ENCODE measurements at regions of chr12 and their contacts with region 1.

Region 1: DNA sequence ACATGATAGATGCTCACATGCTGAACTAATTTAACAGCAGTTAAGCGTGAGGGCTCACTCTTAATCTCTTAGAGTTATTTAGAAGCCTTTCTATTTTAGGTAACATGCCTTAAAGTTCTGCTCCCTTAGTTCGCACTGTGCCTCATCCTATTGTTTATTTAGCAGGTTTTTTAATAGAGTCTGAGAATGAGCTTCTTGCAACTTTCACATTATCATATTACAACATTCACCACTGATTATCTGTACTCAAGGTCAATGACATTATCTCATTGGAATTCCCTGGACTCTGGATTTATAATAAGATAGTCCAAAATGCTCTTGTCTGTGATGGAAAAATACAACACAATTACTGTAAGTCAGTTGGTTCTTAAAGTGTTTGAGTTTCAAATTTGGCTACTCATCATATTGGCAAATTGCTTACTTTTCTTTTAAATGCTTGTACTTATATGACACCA is 183.6 kb upstream of the SLC38A2 start:
- DNase-seq: peak in 1 of 2 experiments; percentile 94
- H3K4me3 ChIP-seq: peak overlapping the region; percentile 40; the same call in 1 of the 2 replicates
- H3K27ac ChIP-seq: peak overlapping the region; percentile 94
- H3K4me1 ChIP-seq: peaks cover 68% of the 10 kb centered on the region
- H3K27me3 ChIP-seq: no peaks in the 10 kb centered on the region
- CTCF ChIP-seq: no peak

Region 2: GRCh38 chr12:46414591-46415268 is 141.4 kb before region 1 on chr12:
- CTCF ChIA-PET with region 1: interaction called, 5 read pairs
- POLR2A ChIA-PET with region 1: interaction called, 11 read pairs
- intact Hi-C with region 1: no loop called
- DNase-seq: peak in 1 of 2 experiments; percentile 57
- H3K4me3 ChIP-seq: no peak overlapping the region
- H3K27ac ChIP-seq: peak overlapping the region; percentile 36
- H3K4me1 ChIP-seq: peaks cover 16% of the 10 kb centered on the region
- H3K27me3 ChIP-seq: no peaks in the 10 kb centered on the region
- CTCF ChIP-seq: no peak

Region 3: GRCh38 chr12:46573347-46573658 is 17.2 kb after region 1 on chr12:
- CTCF ChIA-PET with region 1: no interaction called
- POLR2A ChIA-PET with region 1: no interaction called
- intact Hi-C with region 1: no loop called
- DNase-seq: no peak
- H3K4me3 ChIP-seq: no peak overlapping the region
- H3K27ac ChIP-seq: no peak overlapping the region
- H3K4me1 ChIP-seq: no peaks in the 10 kb centered on the region
- H3K27me3 ChIP-seq: no peaks in the 10 kb centered on the region
- CTCF ChIP-seq: no peak

Region 4: DNA sequence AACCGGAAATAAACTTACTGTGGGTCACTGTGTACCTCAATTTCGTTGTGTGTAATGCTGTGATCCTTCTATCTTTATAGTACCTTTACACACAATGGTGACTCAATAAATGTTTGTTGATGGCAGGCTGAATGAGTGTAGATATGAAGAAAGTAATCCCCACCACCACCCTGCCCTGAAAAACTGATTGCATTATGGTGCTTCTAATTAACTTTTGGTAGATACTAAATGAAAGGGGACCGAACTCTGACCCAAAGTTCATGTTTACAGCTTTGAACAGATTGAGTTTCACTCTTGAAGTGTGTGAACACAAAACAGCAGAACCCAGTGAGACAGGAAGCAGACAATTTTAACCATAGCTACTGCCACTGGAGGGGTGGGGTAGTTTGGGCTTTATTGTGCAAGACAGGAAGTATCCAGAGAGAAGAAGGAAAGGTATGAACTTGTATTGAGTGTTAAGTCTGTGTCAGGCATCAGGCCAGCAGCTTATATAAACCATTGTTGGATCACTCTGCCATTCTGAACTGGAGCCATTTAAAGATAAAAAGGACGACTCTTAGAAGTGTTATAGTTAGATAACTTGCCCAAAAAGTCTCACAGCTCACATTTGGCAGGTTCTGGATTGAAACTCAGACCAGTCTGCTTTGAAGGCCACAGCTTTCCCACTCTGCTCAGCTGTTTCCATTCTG is 720.6 kb after region 1 on chr12:
- CTCF ChIA-PET with region 1: no interaction called
- POLR2A ChIA-PET with region 1: no interaction called
- intact Hi-C with region 1: loop called (anchors 10 kb)
- DNase-seq: peak; percentile 64 to 80
- H3K4me3 ChIP-seq: peak overlapping the region; percentile 1; the same call in 1 of the 2 replicates
- H3K27ac ChIP-seq: peak overlapping the region; percentile 93
- H3K4me1 ChIP-seq: peaks cover 76% of the 10 kb centered on the region
- H3K27me3 ChIP-seq: no peaks in the 10 kb centered on the region
- CTCF ChIP-seq: no peak